ENCODE measurements at regions of chr10 and their contacts with region 1.

Region 1: DNA sequence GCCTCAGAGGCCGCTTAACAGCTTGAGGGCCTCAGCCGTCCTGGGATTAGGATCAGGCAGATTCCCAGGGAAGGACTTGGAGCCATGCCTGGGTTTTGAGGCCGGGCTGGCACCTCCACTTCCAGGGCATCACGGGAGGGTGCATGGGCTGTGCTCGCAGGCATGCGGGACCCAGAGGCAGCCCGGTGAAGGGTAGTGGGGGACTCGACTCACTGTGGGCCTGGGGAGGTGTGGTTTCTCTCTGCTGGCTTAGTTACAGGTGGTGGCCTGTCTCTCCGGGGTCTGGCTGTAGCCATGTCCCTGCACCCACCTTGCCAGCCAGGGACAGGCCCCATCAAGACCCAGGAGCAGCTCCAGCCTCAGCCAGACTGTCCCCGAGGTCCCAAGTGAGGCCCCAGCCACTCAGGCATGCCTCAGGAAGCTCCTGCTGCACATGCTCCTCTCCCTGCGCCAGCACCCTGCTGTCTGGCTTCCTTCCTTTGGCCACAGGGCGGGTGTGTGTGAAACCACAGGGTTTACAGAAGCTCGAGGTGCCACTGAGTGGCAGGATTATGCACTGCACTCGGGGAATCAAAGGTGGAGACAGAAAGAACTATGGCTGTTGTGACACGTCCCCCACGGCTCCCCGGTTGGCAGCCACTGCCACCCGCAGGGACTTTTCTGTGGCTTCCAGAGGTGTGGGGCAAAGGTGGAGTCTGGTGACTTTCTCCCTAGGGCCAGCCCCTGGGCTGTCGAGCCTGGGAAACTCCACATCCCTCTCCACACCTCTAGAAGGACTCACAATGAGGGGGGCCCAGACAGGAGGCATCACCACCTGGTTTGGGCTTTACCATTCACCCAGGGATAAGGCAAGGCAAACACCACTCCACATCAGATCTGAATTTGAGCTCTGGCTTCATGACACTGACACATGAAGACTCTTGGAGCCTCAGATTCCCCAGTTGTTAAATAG is 19.7 kb downstream of the GOLGA7B start:
- DNase-seq: peak; percentile 79 to 91
- ATAC-seq: peak; percentile 91 to 95 (median 94)
- H3K4me3 ChIP-seq: no peak overlapping the region
- H3K4me3 Mint-ChIP-seq: peak overlapping the region; percentile 77
- H3K27ac ChIP-seq: peak overlapping the region; percentile 64
- H3K27ac Mint-ChIP-seq: peak overlapping the region; percentile 62 to 81
- H3K4me1 ChIP-seq: peaks cover 24% of the 10 kb centered on the region
- H3K4me1 Mint-ChIP-seq: peaks cover 46 to 52% of the 10 kb centered on the region in 2 donors
- H3K27me3 ChIP-seq: no peaks in the 10 kb centered on the region
- H3K27me3 Mint-ChIP-seq: no peaks in the 10 kb centered on the region
- CTCF ChIP-seq: peak; percentile 69

Region 2: GRCh38 chr10:97792141-97792721 is 77.1 kb before region 1 on chr10:
- intact Hi-C with region 1: loop called (anchors 1 kb)
- DNase-seq: peak; percentile 66 to 86
- ATAC-seq: peak; percentile 63 to 83 (median 82)
- H3K4me3 ChIP-seq: no peak overlapping the region
- H3K4me3 Mint-ChIP-seq: no peak overlapping the region
- H3K27ac ChIP-seq: no peak overlapping the region
- H3K27ac Mint-ChIP-seq: peak overlapping the region in 1 of 2 donors; percentile 60
- H3K4me1 ChIP-seq: peaks cover 27% of the 10 kb centered on the region
- H3K4me1 Mint-ChIP-seq: peaks cover 21 to 28% of the 10 kb centered on the region in 2 donors
- H3K27me3 ChIP-seq: no peaks in the 10 kb centered on the region
- H3K27me3 Mint-ChIP-seq: peaks cover 0 to 6% of the 10 kb centered on the region in 2 donors
- CTCF ChIP-seq: peak; percentile 96

Region 3: DNA sequence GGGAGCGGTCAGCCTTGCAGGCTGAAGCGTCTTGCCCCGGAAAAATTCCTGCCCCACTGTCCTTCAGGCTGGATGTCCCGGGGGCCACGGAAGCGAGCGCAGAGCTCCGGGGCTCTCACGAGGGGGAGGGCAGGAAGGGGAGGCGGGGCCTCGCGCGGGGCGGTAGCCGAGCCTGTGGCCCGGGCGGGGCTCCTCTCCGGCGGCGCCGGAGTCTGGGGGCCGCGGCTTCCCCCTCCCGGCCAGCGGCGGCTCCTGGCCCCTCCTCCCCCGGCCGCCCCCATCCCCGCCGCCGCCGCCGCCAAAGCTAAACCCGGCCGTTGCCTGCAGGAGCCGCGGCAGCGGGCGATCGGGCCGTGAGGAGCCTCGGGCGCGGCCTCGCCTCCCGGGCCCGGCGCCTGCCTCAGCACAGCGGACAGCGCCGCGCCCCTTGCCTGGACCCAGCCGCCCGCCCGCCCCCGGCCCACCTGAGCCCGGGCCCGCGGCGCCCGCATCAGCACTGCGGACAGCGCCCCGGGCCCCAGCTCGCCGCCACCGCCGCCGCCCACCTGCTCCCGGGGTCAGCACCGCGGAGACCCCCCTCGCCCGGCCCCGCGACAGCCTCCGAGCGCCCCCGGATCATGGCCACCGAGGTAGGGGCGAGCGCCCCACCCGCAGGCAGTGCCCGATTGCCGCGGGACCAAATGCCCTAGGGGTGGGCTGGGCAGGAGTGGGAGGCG is 19.5 kb before region 1 on chr10 and contains the start of gene GOLGA7B:
- intact Hi-C with region 1: no loop called
- DNase-seq: peak; percentile 58 to 78
- ATAC-seq: peak; percentile 87 to 91 (median 88)
- H3K4me3 ChIP-seq: peak within 1 kb of the TSS; percentile 61
- H3K4me3 Mint-ChIP-seq: peak within 1 kb of the TSS; percentile 94
- H3K27ac ChIP-seq: no peak within 1 kb of the TSS
- H3K27ac Mint-ChIP-seq: peak within 1 kb of the TSS; percentile 53 to 85
- H3K4me1 ChIP-seq: peaks cover 24% of the 10 kb centered on the region
- H3K4me1 Mint-ChIP-seq: peaks cover 19 to 32% of the 10 kb centered on the region in 2 donors
- H3K27me3 ChIP-seq: peaks cover 6% of the 10 kb centered on the region
- H3K27me3 Mint-ChIP-seq: peaks cover 3 to 6% of the 10 kb centered on the region in 2 donors
- CTCF ChIP-seq: no peak
- total RNA-seq, gene GOLGA7B: 4.1 to 4.6 (median 4.1) TPM

Measured in natural killer cell (primary cell).